Activated CD8-positive, alpha-beta T cell treated with anti-CD3 and anti-CD28 coated beads for 36 hours (primary cell): ENCODE measurements at regions of chr19 and their contacts with region 1.

Region 1: GRCh38 chr19:41912899-41913537 is 15.2 kb downstream of the ERFL start:
- DNase-seq: no peak
- ATAC-seq: peak; percentile 25
- H3K4me3 Mint-ChIP-seq: no peak overlapping the region
- H3K27ac Mint-ChIP-seq: no peak overlapping the region
- H3K4me1 Mint-ChIP-seq: peaks cover 36% of the 10 kb centered on the region
- H3K27me3 Mint-ChIP-seq: peaks cover 20% of the 10 kb centered on the region
- CTCF ChIP-seq: no peak

Region 2: DNA sequence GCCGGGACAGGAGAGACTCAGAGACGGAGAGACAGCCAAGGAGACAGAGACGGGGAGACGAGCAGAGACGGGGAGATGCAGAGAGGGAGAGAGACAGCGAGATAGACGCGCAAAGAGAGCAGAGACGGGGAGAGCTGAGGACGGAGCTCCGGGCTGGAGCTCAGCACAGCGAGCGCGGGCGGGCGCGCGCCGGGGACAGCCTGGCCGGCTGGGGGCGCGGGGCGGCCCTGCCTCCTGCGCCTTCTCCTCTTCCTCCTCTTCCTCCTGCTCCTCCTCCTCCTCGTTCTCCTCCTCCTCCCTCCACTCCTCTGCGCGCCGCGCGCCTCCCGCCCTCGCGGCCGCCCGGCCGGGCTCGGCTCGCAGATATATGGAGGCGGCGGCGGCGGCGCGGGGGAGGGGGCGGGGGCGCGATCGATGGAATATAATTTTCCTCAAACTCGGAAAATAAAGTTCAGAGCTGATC is 15.2 kb after region 1 on chr19 and contains the start of gene ERFL:
- CTCF ChIA-PET with region 1: no interaction called
- POLR2A ChIA-PET with region 1: interaction called, 10 read pairs
- intact Hi-C with region 1: no loop called
- DNase-seq: peak; percentile 47
- ATAC-seq: peak; percentile 41
- H3K4me3 Mint-ChIP-seq: peak within 1 kb of the TSS; percentile 75
- H3K27ac Mint-ChIP-seq: peak within 1 kb of the TSS; percentile 72
- H3K4me1 Mint-ChIP-seq: peaks cover 25% of the 10 kb centered on the region
- H3K27me3 Mint-ChIP-seq: peaks cover 9% of the 10 kb centered on the region
- CTCF ChIP-seq: no peak
- total RNA-seq, gene ERFL: 1.5 to 1.6 TPM